Activated B cell treated with CpG ODN at 0.5 μM for 24 hours (primary cell): ENCODE measurements at regions of chr4 and their contacts with region 1.

Region 1: GRCh38 chr4:25367004-25367621 is 9.9 kb upstream of the ANAPC4 start:
- DNase-seq: no peak
- ATAC-seq: no peak
- H3K4me3 Mint-ChIP-seq: no peak overlapping the region
- H3K27ac Mint-ChIP-seq: no peak overlapping the region
- H3K4me1 Mint-ChIP-seq: no peaks in the 10 kb centered on the region
- H3K27me3 Mint-ChIP-seq: no peaks in the 10 kb centered on the region
- CTCF ChIP-seq: no peak

Region 2: GRCh38 chr4:24488399-24489164 is 878.5 kb before region 1 on chr4:
- CTCF ChIA-PET with region 1: no interaction called
- POLR2A ChIA-PET with region 1: no interaction called
- intact Hi-C with region 1: loop called (anchors 2 kb)
- DNase-seq: no peak
- ATAC-seq: no peak
- H3K4me3 Mint-ChIP-seq: no peak overlapping the region
- H3K27ac Mint-ChIP-seq: no peak overlapping the region
- H3K4me1 Mint-ChIP-seq: no peaks in the 10 kb centered on the region
- H3K27me3 Mint-ChIP-seq: peaks cover 17% of the 10 kb centered on the region
- CTCF ChIP-seq: no peak

Region 3: DNA sequence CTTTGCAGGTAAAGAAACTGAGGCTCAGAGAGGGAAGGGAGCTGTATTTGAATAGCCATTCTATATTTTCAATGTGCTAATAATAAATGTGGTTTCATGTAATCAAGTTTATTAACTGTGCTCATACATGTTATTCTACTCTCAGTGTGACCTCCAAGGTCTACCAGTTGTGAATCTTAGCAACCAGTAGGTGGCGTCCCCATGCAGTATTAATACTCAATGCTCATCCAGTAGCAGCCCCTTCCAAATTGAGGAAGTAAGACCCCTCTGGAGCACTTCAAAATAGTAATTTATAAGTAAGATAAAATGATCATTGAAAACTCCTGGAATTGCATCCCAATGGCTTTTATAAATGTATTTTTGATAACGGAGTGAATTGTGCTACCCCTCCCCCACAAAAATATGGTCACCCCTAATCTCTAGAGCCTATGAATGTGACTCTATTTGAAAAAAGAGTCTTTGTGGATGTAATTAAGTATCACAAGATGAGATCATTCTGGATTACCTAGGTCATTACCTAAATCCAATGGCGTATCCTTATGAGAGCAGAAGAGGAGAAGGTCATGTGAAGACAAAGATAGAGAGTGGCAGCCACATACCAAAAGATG is 186.5 kb before region 1 on chr4:
- CTCF ChIA-PET with region 1: interaction called, 5 read pairs
- POLR2A ChIA-PET with region 1: no interaction called
- intact Hi-C with region 1: loop called (anchors 1 kb)
- DNase-seq: no peak
- ATAC-seq: peak; percentile 82
- H3K4me3 Mint-ChIP-seq: no peak overlapping the region
- H3K27ac Mint-ChIP-seq: no peak overlapping the region
- H3K4me1 Mint-ChIP-seq: no peaks in the 10 kb centered on the region
- H3K27me3 Mint-ChIP-seq: no peaks in the 10 kb centered on the region
- CTCF ChIP-seq: no peak

Region 4: DNA sequence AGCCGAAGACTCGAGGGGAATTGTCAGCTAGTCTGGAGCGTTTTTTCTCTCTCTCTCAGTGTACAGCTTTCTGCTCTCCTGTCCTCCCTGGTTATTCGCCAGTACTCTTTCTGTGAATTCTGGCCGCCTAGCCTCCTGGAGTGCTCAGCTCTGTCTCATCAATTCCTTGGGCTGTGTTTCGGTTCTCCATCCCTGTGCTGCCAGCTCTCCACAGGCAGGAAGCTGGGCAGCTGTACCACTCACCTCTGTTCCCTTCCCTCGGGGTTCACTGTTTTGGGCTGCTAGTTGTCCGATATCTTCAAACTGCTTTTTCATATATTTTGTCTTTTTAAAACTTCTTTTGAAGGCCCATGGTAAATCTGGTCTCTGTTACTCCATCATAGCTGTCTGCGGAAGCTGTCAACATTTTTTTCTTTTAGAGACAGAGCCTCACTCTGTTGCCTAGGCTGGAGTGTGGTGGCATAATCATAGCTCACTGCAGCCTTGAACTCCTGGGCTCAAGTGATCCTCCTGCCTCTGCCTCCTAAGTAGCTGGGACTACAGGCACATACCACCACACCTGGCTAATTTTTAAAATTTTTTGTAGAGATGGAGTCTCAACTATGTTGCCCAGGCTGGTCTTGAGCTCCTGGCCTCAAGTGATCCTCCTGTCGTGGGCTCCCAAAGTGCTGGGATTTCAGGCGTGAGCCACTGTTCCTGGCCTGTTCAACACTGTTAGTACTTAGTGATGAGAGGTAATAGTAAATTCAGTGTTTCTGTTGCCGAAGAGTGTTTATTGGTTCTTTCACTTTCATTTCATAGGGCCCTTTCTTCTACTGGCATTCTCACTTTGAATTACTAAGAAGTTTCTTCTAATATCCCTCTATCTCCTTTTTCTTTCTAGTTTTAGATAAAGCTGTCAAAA is 36.0 kb before region 1 on chr4:
- CTCF ChIA-PET with region 1: interaction called, 10 read pairs
- POLR2A ChIA-PET with region 1: no interaction called
- intact Hi-C with region 1: no loop called
- DNase-seq: no peak
- ATAC-seq: no peak
- H3K4me3 Mint-ChIP-seq: peak overlapping the region; percentile 64
- H3K27ac Mint-ChIP-seq: no peak overlapping the region
- H3K4me1 Mint-ChIP-seq: peaks cover 9% of the 10 kb centered on the region
- H3K27me3 Mint-ChIP-seq: no peaks in the 10 kb centered on the region
- CTCF ChIP-seq: no peak

Region 5: DNA sequence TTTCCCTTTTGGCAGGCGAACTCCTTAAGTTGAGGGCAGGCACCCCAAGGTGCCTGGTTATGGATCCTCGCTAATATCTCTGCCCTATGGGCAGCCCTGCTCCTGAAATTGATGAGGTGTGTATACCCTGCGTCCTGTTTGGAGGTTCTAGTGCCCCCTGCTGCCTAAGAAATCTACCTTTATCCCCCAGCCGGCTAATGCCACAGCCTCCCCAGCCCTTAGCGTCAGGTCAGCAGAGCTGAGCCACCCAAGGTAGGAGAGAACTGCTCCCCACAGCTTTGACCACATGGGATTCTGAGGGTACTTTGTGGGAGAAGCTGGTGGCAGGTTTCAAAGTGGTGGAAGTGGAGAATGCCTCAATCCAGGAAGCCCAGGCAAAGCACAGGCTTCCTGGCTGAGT is 60.8 kb after region 1 on chr4:
- CTCF ChIA-PET with region 1: no interaction called
- POLR2A ChIA-PET with region 1: no interaction called
- intact Hi-C with region 1: no loop called
- DNase-seq: no peak
- ATAC-seq: no peak
- H3K4me3 Mint-ChIP-seq: no peak overlapping the region
- H3K27ac Mint-ChIP-seq: no peak overlapping the region
- H3K4me1 Mint-ChIP-seq: no peaks in the 10 kb centered on the region
- H3K27me3 Mint-ChIP-seq: no peaks in the 10 kb centered on the region
- CTCF ChIP-seq: no peak

Region 6: DNA sequence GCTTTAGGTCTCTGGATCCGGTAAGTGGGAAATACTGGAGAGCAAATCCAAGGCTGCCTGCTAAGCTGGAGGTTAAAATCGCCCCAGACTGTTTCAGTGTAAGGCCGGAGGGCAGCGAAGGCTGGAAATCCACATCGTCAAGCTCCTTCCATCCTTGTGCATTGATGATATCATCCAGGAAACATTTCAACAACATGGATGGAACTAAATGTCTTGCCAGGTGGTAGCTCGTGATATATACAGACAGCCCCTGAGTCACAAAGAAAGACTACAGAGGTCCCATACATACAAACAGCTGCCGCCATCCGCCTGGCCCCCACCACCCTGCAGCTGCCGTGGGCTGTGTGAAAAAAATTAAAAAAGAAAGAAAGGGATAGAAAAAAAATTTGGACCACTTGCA is 804.8 kb after region 1 on chr4:
- CTCF ChIA-PET with region 1: no interaction called
- POLR2A ChIA-PET with region 1: no interaction called
- intact Hi-C with region 1: no loop called
- DNase-seq: no peak
- ATAC-seq: no peak
- H3K4me3 Mint-ChIP-seq: no peak overlapping the region
- H3K27ac Mint-ChIP-seq: no peak overlapping the region
- H3K4me1 Mint-ChIP-seq: peaks cover 13% of the 10 kb centered on the region
- H3K27me3 Mint-ChIP-seq: peaks cover 2% of the 10 kb centered on the region
- CTCF ChIP-seq: no peak

Region 7: GRCh38 chr4:26424838-26425237 is 1057.7 kb after region 1 on chr4:
- CTCF ChIA-PET with region 1: no interaction called
- POLR2A ChIA-PET with region 1: no interaction called
- intact Hi-C with region 1: no loop called
- DNase-seq: no peak
- ATAC-seq: no peak
- H3K4me3 Mint-ChIP-seq: no peak overlapping the region
- H3K27ac Mint-ChIP-seq: no peak overlapping the region
- H3K4me1 Mint-ChIP-seq: no peaks in the 10 kb centered on the region
- H3K27me3 Mint-ChIP-seq: no peaks in the 10 kb centered on the region
- CTCF ChIP-seq: no peak

Region 8: GRCh38 chr4:26583865-26584652 is 1216.9 kb after region 1 on chr4 and contains the start of gene TBC1D19:
- CTCF ChIA-PET with region 1: no interaction called
- POLR2A ChIA-PET with region 1: no interaction called
- intact Hi-C with region 1: no loop called
- DNase-seq: peak; percentile 82
- ATAC-seq: peak; percentile 96
- H3K4me3 Mint-ChIP-seq: peak within 1 kb of the TSS; percentile 96
- H3K27ac Mint-ChIP-seq: peak within 1 kb of the TSS; percentile 93
- H3K4me1 Mint-ChIP-seq: peaks cover 24% of the 10 kb centered on the region
- H3K27me3 Mint-ChIP-seq: peaks cover under 1% of the 10 kb centered on the region
- CTCF ChIP-seq: no peak
- total RNA-seq, gene TBC1D19: 5.2 and 6.7 TPM in 2 replicates